ENCODE measurements at regions of chr4 and their contacts with region 1.

Region 1: DNA sequence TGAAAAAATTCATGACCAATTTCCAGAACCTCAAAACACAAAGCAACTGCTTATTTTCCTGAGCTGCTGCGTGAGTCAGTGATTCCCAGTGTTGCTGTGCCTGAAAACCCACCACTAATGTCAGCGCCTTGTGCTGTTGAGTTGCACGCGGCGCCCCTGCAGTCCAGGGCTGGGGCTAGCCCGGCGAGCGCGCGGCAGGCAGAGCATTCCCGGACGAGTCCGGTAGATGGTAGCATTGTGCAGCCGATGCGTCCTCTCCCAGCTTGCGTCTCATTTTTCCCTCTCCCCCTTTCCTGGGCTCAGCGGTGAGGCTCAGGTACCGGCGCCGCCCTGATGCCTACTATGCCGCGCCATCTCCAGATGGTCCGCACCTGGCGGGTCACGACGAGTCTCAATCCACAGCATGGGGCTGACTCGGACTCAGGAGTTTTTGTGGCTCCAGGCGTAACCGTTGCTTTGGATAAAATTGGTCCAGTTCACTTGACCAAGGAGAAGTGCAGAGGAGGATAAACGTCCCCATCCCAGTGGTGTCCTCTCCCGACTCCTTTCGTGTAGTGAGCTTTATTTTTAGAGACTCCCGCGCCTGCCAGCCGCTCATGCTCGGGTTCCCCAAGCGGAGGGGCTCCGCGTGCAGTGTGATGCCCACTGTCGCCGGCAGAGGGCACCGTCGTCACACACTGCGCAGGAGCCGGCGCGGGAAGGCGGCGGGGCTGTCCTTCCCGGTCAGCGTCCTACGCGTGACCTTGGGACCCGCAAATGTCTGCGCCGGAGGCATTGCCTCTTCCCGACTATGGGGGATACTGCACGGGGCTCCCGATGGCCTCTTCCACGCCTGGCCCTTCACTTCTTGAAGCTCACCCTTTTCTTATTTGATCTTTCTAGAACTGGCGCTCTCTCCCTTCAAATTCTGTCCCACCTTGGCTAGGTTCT is 53.6 kb upstream of the IGFBP7 start:
- DNase-seq: peak; percentile 89
- H3K4me3 ChIP-seq: peak overlapping the region; percentile 70 to 91
- H3K27ac ChIP-seq: peak overlapping the region; percentile 71 to 78
- H3K4me1 ChIP-seq: peaks cover 3 to 9% of the 10 kb centered on the region in 2 experiments; a peak in 3 of 4 replicates
- H3K27me3 ChIP-seq: no peaks in the 10 kb centered on the region
- CTCF ChIP-seq: peak; percentile 74
- EP300 ChIP-seq: no peak
- RAD21 ChIP-seq: peak; percentile 91

Region 2: GRCh38 chr4:57053508-57053907 is 110.3 kb before region 1 on chr4:
- CTCF ChIA-PET with region 1: interaction called, 12 read pairs
- POLR2A ChIA-PET with region 1: no interaction called
- DNase-seq: no peak
- H3K4me3 ChIP-seq: no peak overlapping the region
- H3K27ac ChIP-seq: peak overlapping the region in 1 of 2 experiments; percentile 68; a peak in 2 of 4 replicates
- H3K4me1 ChIP-seq: peaks cover 5 to 12% of the 10 kb centered on the region in 2 experiments; a peak in 1 of 4 replicates
- H3K27me3 ChIP-seq: no peaks in the 10 kb centered on the region
- CTCF ChIP-seq: no peak
- EP300 ChIP-seq: no peak
- RAD21 ChIP-seq: no peak

Region 3: DNA sequence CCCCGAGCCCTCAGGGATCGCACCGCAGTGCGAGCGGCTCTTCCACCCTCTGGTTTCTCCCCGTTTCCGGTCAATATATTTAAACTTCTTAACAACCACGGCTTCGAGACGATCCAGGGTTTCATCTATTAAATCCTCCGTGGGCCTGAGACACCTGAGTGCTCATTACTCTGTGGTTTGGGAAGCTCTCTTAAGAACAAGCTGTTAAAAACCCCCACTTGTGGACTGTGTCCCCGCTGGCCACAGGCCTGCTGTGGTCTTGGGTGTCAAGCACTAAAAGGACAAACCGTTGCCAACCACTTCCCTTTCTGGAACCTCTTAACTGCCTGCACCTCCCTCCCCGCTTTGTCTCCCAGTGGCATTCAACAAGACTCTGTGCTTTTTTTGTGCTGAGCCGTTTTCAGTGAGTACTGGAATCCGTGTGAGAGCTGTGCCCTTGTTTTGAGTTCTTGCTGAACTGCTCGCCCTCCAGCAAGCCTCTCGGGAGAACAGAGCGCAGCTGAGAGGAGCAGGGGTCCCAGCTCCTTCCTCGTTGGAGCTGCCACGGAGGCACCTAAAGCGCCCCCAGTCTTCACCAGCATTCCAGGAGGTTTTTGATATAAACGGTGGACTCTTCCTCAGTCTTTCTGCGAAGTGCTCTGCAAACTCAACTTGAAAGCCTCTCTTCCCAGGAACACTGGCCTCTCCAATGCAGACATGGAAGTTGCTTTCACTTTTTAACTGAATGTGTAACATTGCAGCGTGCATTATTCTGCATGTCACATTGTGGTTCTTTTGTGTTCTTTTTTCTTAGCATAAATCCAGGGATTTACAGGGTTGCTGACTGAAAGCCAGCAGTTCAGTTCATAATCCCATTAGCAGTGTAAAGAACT is 52.9 kb before region 1 on chr4:
- CTCF ChIA-PET with region 1: interaction called, 13 read pairs
- POLR2A ChIA-PET with region 1: no interaction called
- DNase-seq: peak; percentile 34
- H3K4me3 ChIP-seq: no peak overlapping the region
- H3K27ac ChIP-seq: no peak overlapping the region
- H3K4me1 ChIP-seq: peaks cover 5 to 12% of the 10 kb centered on the region in 2 experiments
- H3K27me3 ChIP-seq: no peaks in the 10 kb centered on the region
- CTCF ChIP-seq: no peak
- EP300 ChIP-seq: no peak
- RAD21 ChIP-seq: no peak

Region 4: DNA sequence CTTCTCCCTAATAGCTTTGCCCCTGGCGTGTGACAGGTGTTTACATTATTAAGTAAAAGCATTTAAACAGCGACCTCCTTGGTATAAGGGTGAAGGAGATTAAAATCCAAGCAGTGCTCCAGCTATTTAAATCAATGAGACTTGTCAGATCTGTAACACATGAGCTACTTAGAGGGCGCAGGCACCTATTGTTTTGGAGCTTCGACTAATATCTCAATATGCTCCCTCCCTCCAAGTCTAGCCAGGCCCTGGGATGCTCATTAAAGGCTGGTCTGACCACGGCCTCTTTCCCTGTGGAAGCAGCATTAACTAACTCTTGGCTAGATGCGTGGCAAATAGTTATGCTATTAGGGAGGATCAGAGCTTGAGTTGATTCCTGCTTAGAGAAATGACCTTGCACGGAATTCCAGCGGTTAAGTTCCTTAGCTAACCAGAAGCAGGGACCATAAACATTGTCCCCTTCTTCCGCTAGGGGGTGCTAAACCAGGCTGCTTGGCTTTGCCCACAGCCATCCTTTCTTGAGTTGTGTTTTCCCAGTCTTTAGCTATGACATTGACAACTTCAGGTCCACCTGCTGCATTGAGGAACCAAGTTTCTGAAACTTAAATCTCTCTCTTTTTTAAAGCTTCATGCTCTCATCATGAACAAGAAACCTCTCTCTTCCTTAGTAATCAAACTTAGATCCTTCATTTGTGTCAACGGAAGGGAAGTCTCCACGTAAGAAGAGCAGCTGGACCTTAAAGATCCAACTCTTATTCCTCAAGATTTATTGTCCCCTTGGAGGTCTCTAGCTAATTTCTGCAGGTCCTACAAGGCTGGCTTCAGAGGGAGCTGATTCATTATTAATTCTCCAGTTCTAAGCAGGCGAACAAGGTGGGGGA is 27.0 kb after region 1 on chr4:
- CTCF ChIA-PET with region 1: interaction called, 34 read pairs
- POLR2A ChIA-PET with region 1: no interaction called
- DNase-seq: peak; percentile 49
- H3K4me3 ChIP-seq: peak overlapping the region in 1 of 2 experiments; percentile 14; a peak in 1 of 4 replicates
- H3K27ac ChIP-seq: no peak overlapping the region
- H3K4me1 ChIP-seq: no peaks in the 10 kb centered on the region
- H3K27me3 ChIP-seq: no peaks in the 10 kb centered on the region
- CTCF ChIP-seq: peak; percentile 67
- EP300 ChIP-seq: no peak
- RAD21 ChIP-seq: peak; percentile 28; the same call in 1 of the 2 replicates

Region 5: GRCh38 chr4:57270346-57270745 is 106.6 kb after region 1 on chr4:
- CTCF ChIA-PET with region 1: interaction called, 10 read pairs
- POLR2A ChIA-PET with region 1: no interaction called
- DNase-seq: no peak
- H3K4me3 ChIP-seq: no peak overlapping the region
- H3K27ac ChIP-seq: no peak overlapping the region
- H3K4me1 ChIP-seq: peaks cover 0 to 4% of the 10 kb centered on the region in 2 experiments; a peak in 2 of 4 replicates
- H3K27me3 ChIP-seq: no peaks in the 10 kb centered on the region
- CTCF ChIP-seq: no peak
- EP300 ChIP-seq: no peak
- RAD21 ChIP-seq: no peak

Region 6: DNA sequence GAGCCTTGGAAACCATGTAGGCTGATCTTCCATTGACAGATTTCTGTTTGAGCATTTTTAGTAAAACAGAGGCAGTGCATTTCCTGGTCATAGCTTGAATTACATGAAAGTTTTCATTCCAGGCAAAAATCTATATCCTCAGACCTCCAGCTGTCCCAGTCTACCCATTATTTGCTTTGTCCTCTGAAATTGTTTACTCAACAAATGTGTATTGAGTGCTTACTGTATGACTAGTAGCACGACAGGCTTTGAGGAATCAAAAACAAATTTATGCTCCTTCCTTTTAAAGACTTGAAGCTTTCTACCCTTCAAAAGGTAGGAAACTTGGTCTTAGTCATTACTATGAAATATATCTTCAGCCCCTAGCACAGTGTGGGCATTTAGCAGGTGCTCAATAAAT is 254.3 kb after region 1 on chr4:
- CTCF ChIA-PET with region 1: interaction called, 11 read pairs
- POLR2A ChIA-PET with region 1: no interaction called
- DNase-seq: no peak
- H3K4me3 ChIP-seq: no peak overlapping the region
- H3K27ac ChIP-seq: no peak overlapping the region
- H3K4me1 ChIP-seq: no peaks in the 10 kb centered on the region
- H3K27me3 ChIP-seq: no peaks in the 10 kb centered on the region
- CTCF ChIP-seq: no peak
- EP300 ChIP-seq: no peak
- RAD21 ChIP-seq: no peak

Region 7: DNA sequence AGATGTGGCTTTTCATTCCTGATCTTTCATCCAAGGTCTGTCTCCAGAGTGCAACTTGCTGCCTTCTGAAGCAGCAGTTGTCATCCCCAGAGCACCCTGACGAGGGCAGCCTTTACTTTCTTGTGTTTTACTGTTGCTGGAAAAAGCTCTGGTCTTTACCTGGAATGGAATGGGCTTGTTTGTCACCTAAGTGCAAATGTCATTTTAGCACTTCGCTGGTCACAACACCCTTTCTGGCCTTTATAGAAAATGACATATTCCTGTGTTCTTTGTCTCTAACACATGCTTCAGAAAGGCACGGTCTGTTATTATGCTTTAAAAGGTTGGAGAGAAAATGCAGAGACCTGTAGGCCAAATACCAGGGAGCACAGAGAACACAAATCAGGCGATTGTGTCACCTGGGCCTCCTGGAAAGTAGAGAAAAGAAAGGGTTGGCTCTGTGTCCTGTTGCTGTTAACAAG is 279.1 kb after region 1 on chr4:
- CTCF ChIA-PET with region 1: interaction called, 34 read pairs
- POLR2A ChIA-PET with region 1: no interaction called
- DNase-seq: peak; percentile 54
- H3K4me3 ChIP-seq: peak overlapping the region in 1 of 2 experiments; percentile 46; a peak in 1 of 4 replicates
- H3K27ac ChIP-seq: no peak overlapping the region
- H3K4me1 ChIP-seq: no peaks in the 10 kb centered on the region
- H3K27me3 ChIP-seq: no peaks in the 10 kb centered on the region
- CTCF ChIP-seq: peak; percentile 78
- EP300 ChIP-seq: no peak
- RAD21 ChIP-seq: peak; percentile 93

Measured in SK-N-SH (cell line).